Activated naive CD4-positive, alpha-beta T cell treated with anti-CD3 and anti-CD28 coated beads for 36 hours (primary cell): ENCODE measurements at regions of chr1 and their contacts with region 1.

Region 1: GRCh38 chr1:221708987-221709386 is 32.9 kb downstream of the DUSP10 start:
- DNase-seq: peak; percentile 42
- H3K4me3 Mint-ChIP-seq: no peak overlapping the region
- H3K27ac Mint-ChIP-seq: no peak overlapping the region
- H3K4me1 Mint-ChIP-seq: peaks cover 53% of the 10 kb centered on the region
- H3K27me3 Mint-ChIP-seq: no peaks in the 10 kb centered on the region

Region 2: DNA sequence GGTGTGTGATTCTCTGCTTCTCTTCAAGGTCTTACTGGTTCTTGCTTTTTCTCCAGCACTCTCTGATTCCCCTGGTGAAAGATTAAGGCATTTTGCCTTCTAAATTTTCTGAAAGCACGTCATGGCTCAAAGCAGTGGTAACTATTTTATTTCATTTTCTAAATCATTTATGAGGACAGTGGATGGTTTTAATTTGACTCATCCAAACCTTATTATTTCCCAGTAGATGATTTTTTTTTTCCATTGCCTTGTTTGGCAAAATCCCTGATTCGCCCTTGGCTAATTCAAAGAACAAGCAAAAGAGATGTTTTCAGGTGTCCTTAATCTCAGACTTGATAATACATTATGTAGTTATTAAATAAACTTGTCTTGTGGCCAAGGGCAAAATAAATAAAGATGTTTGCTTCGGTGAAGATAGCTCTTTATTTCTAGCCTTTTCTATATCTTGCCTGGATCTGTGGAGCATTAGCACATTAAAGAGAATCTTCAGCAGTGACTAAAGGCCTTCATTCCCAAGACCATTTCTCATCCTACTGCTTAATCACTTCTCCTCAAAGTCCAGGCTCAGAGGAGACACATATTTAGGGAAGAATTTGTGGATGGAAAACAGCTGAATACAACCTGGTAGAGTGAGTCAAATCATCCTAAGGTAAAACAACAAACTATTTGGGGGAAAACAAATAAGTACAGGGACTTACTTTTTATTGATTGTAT is 326.9 kb before region 1 on chr1:
- CTCF ChIA-PET with region 1: no interaction called
- intact Hi-C with region 1: no loop called
- DNase-seq: no peak
- H3K4me3 Mint-ChIP-seq: no peak overlapping the region
- H3K27ac Mint-ChIP-seq: no peak overlapping the region
- H3K4me1 Mint-ChIP-seq: no peaks in the 10 kb centered on the region
- H3K27me3 Mint-ChIP-seq: peaks cover 14% of the 10 kb centered on the region

Region 3: DNA sequence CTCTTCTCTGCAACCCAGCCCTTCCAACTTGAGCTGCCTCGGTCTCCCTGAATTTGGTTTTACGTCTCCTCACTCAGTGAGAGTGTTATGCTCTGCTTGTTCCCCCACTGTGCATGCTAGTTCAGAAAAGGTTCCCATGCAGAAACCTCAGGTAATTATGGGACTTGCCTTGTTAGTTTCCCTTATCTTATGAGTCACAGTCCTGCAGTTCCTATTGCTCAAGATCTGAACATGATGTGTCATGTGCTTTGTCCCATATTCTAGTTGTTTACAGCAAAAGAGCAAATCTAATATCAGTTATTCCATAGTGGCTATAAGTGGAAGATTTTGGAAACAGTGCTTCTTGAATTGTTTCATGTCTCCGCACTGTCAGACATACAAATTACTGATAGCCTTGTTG is 41.5 kb before region 1 on chr1:
- CTCF ChIA-PET with region 1: no interaction called
- intact Hi-C with region 1: loop called (anchors 2 kb)
- DNase-seq: no peak
- H3K4me3 Mint-ChIP-seq: no peak overlapping the region
- H3K27ac Mint-ChIP-seq: no peak overlapping the region
- H3K4me1 Mint-ChIP-seq: peaks cover 7% of the 10 kb centered on the region
- H3K27me3 Mint-ChIP-seq: peaks cover 8% of the 10 kb centered on the region

Region 4: GRCh38 chr1:221725735-221726672 is 17.0 kb after region 1 on chr1:
- CTCF ChIA-PET with region 1: interaction called, 3 read pairs
- intact Hi-C with region 1: loop called (anchors 1 kb)
- DNase-seq: no peak
- H3K4me3 Mint-ChIP-seq: peak overlapping the region; percentile 69
- H3K27ac Mint-ChIP-seq: peak overlapping the region; percentile 99
- H3K4me1 Mint-ChIP-seq: peaks cover 67% of the 10 kb centered on the region
- H3K27me3 Mint-ChIP-seq: no peaks in the 10 kb centered on the region

Region 5: GRCh38 chr1:221816899-221817298 is 107.9 kb after region 1 on chr1:
- CTCF ChIA-PET with region 1: no interaction called
- intact Hi-C with region 1: no loop called
- DNase-seq: no peak
- H3K4me3 Mint-ChIP-seq: no peak overlapping the region
- H3K27ac Mint-ChIP-seq: no peak overlapping the region
- H3K4me1 Mint-ChIP-seq: no peaks in the 10 kb centered on the region
- H3K27me3 Mint-ChIP-seq: no peaks in the 10 kb centered on the region